GM10248 (cell line): ENCODE measurements at regions of chr12 and their contacts with region 1.

Region 1: GRCh38 chr12:98532681-98533304 is 17.4 kb downstream of the TMPO start:
- DNase-seq: no peak
- CTCF ChIP-seq: peak; percentile 26

Region 2: GRCh38 chr12:98516184-98516873 is 16.5 kb before region 1 on chr12:
- CTCF ChIA-PET with region 1: interaction called, 22 read pairs
- POLR2A ChIA-PET with region 1: interaction called, 3 read pairs
- DNase-seq: peak; percentile 86
- CTCF ChIP-seq: peak; percentile 63

Region 3: DNA sequence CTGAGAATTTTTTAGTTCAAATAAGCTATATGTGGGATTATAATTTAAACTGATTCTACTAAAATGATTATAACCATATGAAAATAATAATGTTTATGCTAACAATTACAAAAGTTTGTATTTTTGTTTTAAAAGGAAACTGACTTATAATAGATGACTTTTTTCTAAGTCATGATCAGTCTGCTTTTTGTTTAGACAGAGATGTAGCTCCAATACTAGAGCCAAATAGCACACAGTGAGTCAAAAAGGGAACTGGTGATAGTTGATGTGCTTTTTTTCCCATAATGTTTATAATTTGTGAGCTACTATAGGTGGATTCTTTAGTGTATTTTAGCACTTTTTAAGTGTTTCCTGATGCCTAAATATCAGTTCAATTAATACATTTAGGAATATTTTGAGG is 10.9 kb after region 1 on chr12:
- CTCF ChIA-PET with region 1: interaction called, 14 read pairs
- POLR2A ChIA-PET with region 1: interaction called, 4 read pairs
- DNase-seq: no peak
- CTCF ChIP-seq: no peak